Calu3 (cell line): ENCODE measurements at regions of chr2 and their contacts with region 1.

Region 1: DNA sequence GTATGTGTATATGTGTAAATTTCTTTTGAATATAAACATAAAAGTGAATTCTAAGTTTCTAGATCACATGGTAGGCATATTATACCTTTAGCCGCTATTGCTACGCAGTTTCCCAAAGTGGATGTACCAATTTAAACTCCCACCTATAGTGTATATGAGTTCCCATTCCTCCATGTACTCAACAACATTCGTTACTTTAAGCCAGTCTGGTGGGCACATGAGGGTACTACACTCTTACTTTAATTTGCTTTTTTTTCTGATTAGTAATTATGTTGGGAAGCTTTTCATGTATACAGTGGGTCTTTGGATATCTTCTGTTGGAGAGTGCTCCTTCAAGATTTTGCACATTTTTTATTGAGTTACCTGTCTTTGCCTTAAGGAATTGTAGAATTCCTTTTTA is 683.8 kb downstream of the ERBB4 start:
- DNase-seq: no peak
- H3K4me3 Mint-ChIP-seq: no peak overlapping the region
- H3K27ac Mint-ChIP-seq: no peak overlapping the region
- H3K4me1 Mint-ChIP-seq: no peaks in the 10 kb centered on the region
- H3K27me3 Mint-ChIP-seq: no peaks in the 10 kb centered on the region
- CTCF ChIP-seq: no peak

Region 2: GRCh38 chr2:211751848-211752247 is 103.0 kb before region 1 on chr2:
- CTCF ChIA-PET with region 1: no interaction called
- intact Hi-C with region 1: loop called (anchors 5 kb)
- DNase-seq: no peak
- H3K4me3 Mint-ChIP-seq: no peak overlapping the region
- H3K27ac Mint-ChIP-seq: no peak overlapping the region
- H3K4me1 Mint-ChIP-seq: no peaks in the 10 kb centered on the region
- H3K27me3 Mint-ChIP-seq: no peaks in the 10 kb centered on the region
- CTCF ChIP-seq: no peak